ENCODE measurements at regions of chr9 and their contacts with region 1.

Region 1: GRCh38 chr9:137590462-137591383 is at the start of gene ZMYND19:
- DNase-seq: peak; percentile 92 to 100 (median 100)
- ATAC-seq: peak; percentile 96
- H3K4me3 ChIP-seq: peak within 1 kb of the TSS; percentile 92
- H3K27ac ChIP-seq: peak within 1 kb of the TSS; percentile 76
- H3K4me1 ChIP-seq: peaks cover 27 to 54% of the 10 kb centered on the region in 2 experiments; a peak in 4 of 5 replicates
- H3K27me3 ChIP-seq: no peaks in the 10 kb centered on the region
- CTCF ChIP-seq: peak in 2 of 3 experiments; percentile 15 to 31; a peak in 4 of 6 replicates
- EP300 ChIP-seq: no peak
- POLR2A ChIP-seq: peak; percentile 63
- RAD21 ChIP-seq: no peak
- polyA plus RNA-seq, gene ZMYND19: 1.0 to 2.4 TPM

Region 2: DNA sequence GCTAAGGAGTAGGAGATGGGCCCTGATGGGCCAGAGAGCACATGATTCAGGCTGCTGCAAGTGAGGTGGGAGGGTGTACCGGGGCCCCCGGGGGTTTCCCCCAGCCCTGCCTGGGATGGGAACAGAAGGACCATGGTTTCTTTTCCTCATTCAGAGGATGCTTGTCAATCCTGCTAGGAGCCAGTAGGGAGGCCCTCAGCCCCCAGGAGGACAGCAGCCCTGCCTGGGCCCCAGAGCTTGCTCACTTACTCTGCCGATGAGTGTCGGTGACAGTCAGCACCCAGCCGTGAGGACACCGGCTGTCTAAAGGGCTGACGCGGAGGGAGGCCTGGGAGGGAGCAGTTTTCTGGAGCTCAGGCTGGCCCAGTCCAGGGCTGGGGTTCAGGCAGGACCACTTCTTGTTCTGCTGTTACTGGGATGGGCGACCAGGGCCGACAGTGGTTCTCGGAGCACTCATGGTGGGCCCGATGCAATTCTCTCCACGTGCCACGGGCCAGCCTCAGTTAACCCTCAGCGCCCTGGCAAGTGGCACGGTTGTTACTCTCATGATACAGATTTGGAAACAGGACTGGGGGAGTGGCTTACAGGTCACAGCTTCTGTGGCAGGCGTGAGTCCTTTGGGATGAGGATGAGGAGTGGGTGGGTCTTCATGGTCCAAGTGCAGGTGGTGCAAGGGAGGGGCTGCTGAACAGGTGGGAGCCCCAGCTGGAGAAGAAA is 16.6 kb after region 1 on chr9:
- CTCF ChIA-PET with region 1: no interaction called
- POLR2A ChIA-PET with region 1: interaction called, 28 read pairs
- in situ Hi-C with region 1: no loop called
- intact Hi-C with region 1: no loop called
- DNase-seq: no peak
- ATAC-seq: no peak
- H3K4me3 ChIP-seq: no peak overlapping the region
- H3K27ac ChIP-seq: no peak overlapping the region
- H3K4me1 ChIP-seq: peaks cover 30 to 54% of the 10 kb centered on the region in 2 experiments; a peak in 4 of 5 replicates
- H3K27me3 ChIP-seq: no peaks in the 10 kb centered on the region
- CTCF ChIP-seq: no peak
- EP300 ChIP-seq: no peak
- POLR2A ChIP-seq: no peak
- RAD21 ChIP-seq: no peak

Measured in K562 (cell line).